Activated CD4-positive, alpha-beta T cell treated with anti-CD3 and anti-CD28 coated beads for 36 hours (primary cell): ENCODE measurements at regions of chr11 and their contacts with region 1.

Region 1: DNA sequence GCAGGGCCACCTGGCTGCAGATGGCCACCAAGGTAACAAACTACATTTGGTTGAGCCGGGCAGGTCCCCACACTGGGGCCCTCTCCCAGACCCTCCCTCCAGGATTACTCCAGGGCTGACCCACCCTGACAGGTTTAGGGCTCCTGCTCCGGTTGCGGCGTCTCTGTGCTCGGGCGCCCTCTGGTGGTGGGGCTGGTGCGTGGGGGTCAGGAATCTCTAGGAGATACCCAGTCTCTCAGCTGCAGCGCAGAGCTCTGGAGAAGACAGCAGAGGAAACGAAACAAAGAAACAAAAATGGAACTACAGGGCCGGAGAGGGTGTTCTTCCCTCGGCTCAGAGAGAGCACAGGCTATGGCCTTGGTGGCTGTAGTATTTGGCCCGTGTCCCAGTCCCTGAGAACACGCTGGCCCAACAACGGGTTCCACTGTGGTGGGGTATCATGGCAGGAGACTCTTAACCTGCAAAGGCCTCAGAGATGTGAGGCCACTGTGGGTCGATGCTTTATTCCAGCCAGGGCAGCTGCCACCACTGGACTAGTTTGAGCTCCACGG is 2.4 kb downstream of the C11orf96 start:
- DNase-seq: peak; percentile 89
- ATAC-seq: peak; percentile 55
- H3K4me3 Mint-ChIP-seq: peak overlapping the region; percentile 21
- H3K27ac Mint-ChIP-seq: no peak overlapping the region
- H3K4me1 Mint-ChIP-seq: peaks cover 17% of the 10 kb centered on the region
- H3K27me3 Mint-ChIP-seq: peaks cover 51% of the 10 kb centered on the region

Region 2: GRCh38 chr11:43579171-43579918 is 365.5 kb before region 1 on chr11:
- CTCF ChIA-PET with region 1: no interaction called
- POLR2A ChIA-PET with region 1: no interaction called
- intact Hi-C with region 1: loop called (anchors 5 kb)
- DNase-seq: peak; percentile 76
- ATAC-seq: peak; percentile 65
- H3K4me3 Mint-ChIP-seq: peak overlapping the region; percentile 47
- H3K27ac Mint-ChIP-seq: no peak overlapping the region
- H3K4me1 Mint-ChIP-seq: peaks cover 43% of the 10 kb centered on the region
- H3K27me3 Mint-ChIP-seq: peaks cover 84% of the 10 kb centered on the region

Region 3: GRCh38 chr11:43825217-43825816 is 119.5 kb before region 1 on chr11:
- CTCF ChIA-PET with region 1: no interaction called
- POLR2A ChIA-PET with region 1: no interaction called
- intact Hi-C with region 1: loop called in 1 of 2 experiments (anchors 2 kb)
- DNase-seq: peak; percentile 21
- ATAC-seq: no peak
- H3K4me3 Mint-ChIP-seq: no peak overlapping the region
- H3K27ac Mint-ChIP-seq: no peak overlapping the region
- H3K4me1 Mint-ChIP-seq: peaks cover 2% of the 10 kb centered on the region
- H3K27me3 Mint-ChIP-seq: no peaks in the 10 kb centered on the region

Region 4: DNA sequence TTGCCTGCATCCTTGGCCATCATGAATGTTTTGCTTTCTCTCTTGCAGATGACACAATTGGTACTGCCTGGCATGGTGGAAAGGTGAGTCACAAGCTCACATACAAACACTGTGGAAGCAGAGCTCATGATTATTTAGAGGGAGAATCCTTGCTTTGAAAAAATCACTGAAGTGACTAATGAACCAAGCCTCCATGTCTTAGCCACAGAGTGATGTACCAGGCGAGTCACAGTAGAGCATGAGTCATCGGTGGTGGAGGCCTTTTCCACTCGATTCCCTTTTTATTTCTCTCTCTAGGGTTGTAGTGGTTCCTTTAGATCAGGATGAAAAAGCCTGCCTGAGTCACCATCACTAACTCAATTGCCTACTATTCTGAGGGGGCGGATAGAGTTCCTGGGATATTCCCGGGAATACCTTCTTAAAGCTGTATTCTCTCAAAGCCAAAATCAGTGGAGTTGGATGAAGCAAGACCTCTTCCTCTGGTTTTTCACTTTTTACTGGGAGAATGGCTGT is 113.9 kb before region 1 on chr11:
- CTCF ChIA-PET with region 1: no interaction called
- POLR2A ChIA-PET with region 1: no interaction called
- intact Hi-C with region 1: loop called in 1 of 2 experiments (anchors 2 kb)
- DNase-seq: peak; percentile 81
- ATAC-seq: peak; percentile 99
- H3K4me3 Mint-ChIP-seq: no peak overlapping the region
- H3K27ac Mint-ChIP-seq: peak overlapping the region; percentile 73
- H3K4me1 Mint-ChIP-seq: peaks cover 24% of the 10 kb centered on the region
- H3K27me3 Mint-ChIP-seq: no peaks in the 10 kb centered on the region

Region 5: DNA sequence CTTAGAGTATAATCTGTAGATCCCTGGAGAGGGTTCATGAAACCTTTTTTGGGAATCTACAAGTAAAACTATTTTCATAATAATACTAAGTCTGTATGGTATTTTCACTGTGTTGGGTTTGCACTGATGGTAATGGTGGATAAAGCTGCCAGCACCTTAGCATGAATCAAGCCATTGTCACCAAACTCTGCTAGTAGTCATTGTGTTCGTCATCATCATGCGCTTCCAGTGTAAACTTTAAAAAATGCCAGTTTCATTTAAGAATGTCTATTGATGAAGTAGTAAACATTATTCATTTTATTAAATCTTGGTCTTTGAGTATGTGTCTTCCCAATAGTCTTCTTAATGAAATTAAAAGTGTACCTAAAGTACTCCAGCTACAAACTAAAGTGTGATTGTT is 49.2 kb before region 1 on chr11:
- CTCF ChIA-PET with region 1: interaction called, 35 read pairs
- POLR2A ChIA-PET with region 1: no interaction called
- intact Hi-C with region 1: loop called (anchors 1 kb)
- DNase-seq: no peak
- ATAC-seq: no peak
- H3K4me3 Mint-ChIP-seq: no peak overlapping the region
- H3K27ac Mint-ChIP-seq: no peak overlapping the region
- H3K4me1 Mint-ChIP-seq: no peaks in the 10 kb centered on the region
- H3K27me3 Mint-ChIP-seq: no peaks in the 10 kb centered on the region

Region 6: GRCh38 chr11:44024977-44025376 is 80.1 kb after region 1 on chr11:
- CTCF ChIA-PET with region 1: no interaction called
- POLR2A ChIA-PET with region 1: no interaction called
- intact Hi-C with region 1: no loop called
- DNase-seq: no peak
- ATAC-seq: no peak
- H3K4me3 Mint-ChIP-seq: no peak overlapping the region
- H3K27ac Mint-ChIP-seq: no peak overlapping the region
- H3K4me1 Mint-ChIP-seq: no peaks in the 10 kb centered on the region
- H3K27me3 Mint-ChIP-seq: peaks cover 30% of the 10 kb centered on the region

Region 7: GRCh38 chr11:44036811-44037657 is 92.2 kb after region 1 on chr11:
- CTCF ChIA-PET with region 1: no interaction called
- POLR2A ChIA-PET with region 1: no interaction called
- intact Hi-C with region 1: loop called (anchors 2 to 5 kb)
- DNase-seq: peak; percentile 65
- ATAC-seq: peak; percentile 90
- H3K4me3 Mint-ChIP-seq: no peak overlapping the region
- H3K27ac Mint-ChIP-seq: no peak overlapping the region
- H3K4me1 Mint-ChIP-seq: no peaks in the 10 kb centered on the region
- H3K27me3 Mint-ChIP-seq: peaks cover 5% of the 10 kb centered on the region

Region 8: GRCh38 chr11:44309483-44310205 is 364.8 kb after region 1 on chr11 and contains the start of gene ALX4:
- CTCF ChIA-PET with region 1: no interaction called
- POLR2A ChIA-PET with region 1: no interaction called
- intact Hi-C with region 1: loop called in 1 of 2 experiments (anchors 10 kb)
- DNase-seq: peak; percentile 69
- ATAC-seq: peak; percentile 32
- H3K4me3 Mint-ChIP-seq: no peak within 1 kb of the TSS
- H3K27ac Mint-ChIP-seq: no peak within 1 kb of the TSS
- H3K4me1 Mint-ChIP-seq: peaks cover 23% of the 10 kb centered on the region
- H3K27me3 Mint-ChIP-seq: peaks cover 78% of the 10 kb centered on the region
- total RNA-seq, gene ALX4: not detected